ENCODE measurements at regions of chrX and their contacts with region 1.

Region 1: DNA sequence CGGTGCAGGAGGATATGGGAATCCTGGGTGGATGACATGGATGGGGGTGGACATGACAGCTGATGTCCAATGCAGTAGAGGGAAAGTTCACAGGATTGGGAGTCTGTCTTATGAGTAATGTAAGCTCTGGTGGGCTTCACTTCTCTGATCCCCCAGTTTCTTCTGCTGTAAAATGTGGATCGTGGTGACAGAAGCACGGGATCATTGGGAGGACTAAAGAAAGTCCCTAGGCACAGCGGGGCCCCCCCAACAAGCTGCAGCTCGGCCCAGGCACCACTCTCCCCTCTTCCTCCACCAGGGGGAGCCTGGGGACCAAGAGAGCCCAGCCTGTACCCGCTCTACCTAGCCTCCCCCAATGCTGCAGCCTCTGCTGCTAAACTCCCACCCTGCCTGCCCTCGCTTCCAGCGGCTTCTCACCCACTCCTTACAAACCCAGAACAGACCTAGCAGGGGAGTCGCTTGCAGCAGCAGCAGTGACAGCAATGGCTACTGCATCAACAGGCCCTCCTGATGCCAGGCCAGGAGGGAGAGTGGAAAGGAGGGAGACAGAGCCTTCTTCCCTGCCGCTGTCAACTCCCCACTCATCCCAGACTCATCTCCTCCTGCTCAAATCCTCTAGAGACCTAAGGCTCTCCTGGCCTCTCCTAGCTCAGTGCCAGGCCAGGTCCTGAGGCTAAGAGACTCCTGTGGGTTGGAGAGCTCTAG is 36.1 kb upstream of the IQSEC2 start:
- DNase-seq: peak; percentile 68
- H3K4me3 Mint-ChIP-seq: no peak overlapping the region
- H3K27ac Mint-ChIP-seq: no peak overlapping the region
- H3K4me1 Mint-ChIP-seq: no peaks in the 10 kb centered on the region
- H3K27me3 Mint-ChIP-seq: peaks cover 68% of the 10 kb centered on the region
- CTCF ChIP-seq: peak; percentile 83

Region 2: GRCh38 chrX:53071604-53072417 is 245.7 kb before region 1 on chrX:
- CTCF ChIA-PET with region 1: no interaction called
- POLR2A ChIA-PET with region 1: no interaction called
- intact Hi-C with region 1: no loop called
- DNase-seq: peak; percentile 86
- H3K4me3 Mint-ChIP-seq: peak overlapping the region; percentile 38
- H3K27ac Mint-ChIP-seq: peak overlapping the region; percentile 2
- H3K4me1 Mint-ChIP-seq: peaks cover 13% of the 10 kb centered on the region
- H3K27me3 Mint-ChIP-seq: peaks cover 71% of the 10 kb centered on the region
- CTCF ChIP-seq: peak; percentile 77

Region 3: GRCh38 chrX:53294024-53294648 is 23.4 kb before region 1 on chrX:
- CTCF ChIA-PET with region 1: interaction called, 13 read pairs
- POLR2A ChIA-PET with region 1: interaction called, 4 read pairs
- intact Hi-C with region 1: no loop called
- DNase-seq: no peak
- H3K4me3 Mint-ChIP-seq: no peak overlapping the region
- H3K27ac Mint-ChIP-seq: no peak overlapping the region
- H3K4me1 Mint-ChIP-seq: no peaks in the 10 kb centered on the region
- H3K27me3 Mint-ChIP-seq: peaks cover 62% of the 10 kb centered on the region
- CTCF ChIP-seq: peak; percentile 35

Region 4: GRCh38 chrX:53330331-53330730 is 12.8 kb after region 1 on chrX:
- CTCF ChIA-PET with region 1: interaction called, 145 read pairs
- POLR2A ChIA-PET with region 1: interaction called, 3 read pairs
- intact Hi-C with region 1: no loop called
- DNase-seq: no peak
- H3K4me3 Mint-ChIP-seq: no peak overlapping the region
- H3K27ac Mint-ChIP-seq: no peak overlapping the region
- H3K4me1 Mint-ChIP-seq: no peaks in the 10 kb centered on the region
- H3K27me3 Mint-ChIP-seq: peaks cover 98% of the 10 kb centered on the region
- CTCF ChIP-seq: no peak

Region 5: GRCh38 chrX:53433651-53434639 is 116.4 kb after region 1 on chrX and contains the start of gene HSD17B10:
- CTCF ChIA-PET with region 1: interaction called, 49 read pairs
- POLR2A ChIA-PET with region 1: interaction called, 5 read pairs
- intact Hi-C with region 1: loop called (anchors 1 kb)
- DNase-seq: peak; percentile 79
- H3K4me3 Mint-ChIP-seq: peak within 1 kb of the TSS; percentile 82
- H3K27ac Mint-ChIP-seq: peak within 1 kb of the TSS; percentile 79
- H3K4me1 Mint-ChIP-seq: peaks cover 16% of the 10 kb centered on the region
- H3K27me3 Mint-ChIP-seq: peaks cover 47% of the 10 kb centered on the region
- CTCF ChIP-seq: no peak
- total RNA-seq, gene HSD17B10: 113 and 115 TPM in 2 replicates

Region 6: DNA sequence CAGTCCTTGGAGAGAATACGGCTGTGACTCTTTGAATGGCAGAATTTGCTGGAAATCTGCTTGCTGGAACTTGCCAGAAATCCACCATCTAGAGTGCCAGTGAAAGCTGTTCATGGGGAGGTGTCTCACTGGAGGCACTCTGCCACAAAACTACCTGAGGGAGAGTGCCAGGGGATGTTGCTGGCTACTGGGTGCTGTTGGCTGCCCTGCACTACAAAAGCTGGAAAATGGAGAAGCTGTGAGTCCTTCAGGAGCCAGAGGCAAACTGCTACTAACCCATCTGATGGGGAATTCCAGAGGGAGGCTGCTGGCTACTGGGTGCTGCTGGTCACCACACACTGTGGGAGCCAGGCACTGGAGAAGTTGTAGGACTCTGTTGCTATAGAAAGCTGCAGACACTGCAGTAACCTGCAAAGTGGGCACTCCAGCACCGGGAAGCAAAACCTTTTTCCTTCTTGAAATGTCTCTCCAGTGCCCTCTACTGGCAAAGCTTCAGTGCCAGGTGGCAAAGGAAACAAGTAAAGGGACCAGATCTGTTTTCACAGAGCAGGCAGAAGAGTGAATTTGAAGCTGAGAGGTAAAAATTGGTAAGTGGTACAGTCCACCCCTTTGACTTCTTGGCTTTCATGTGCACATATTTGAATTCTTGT is 164.4 kb after region 1 on chrX:
- CTCF ChIA-PET with region 1: interaction called, 62 read pairs
- POLR2A ChIA-PET with region 1: interaction called, 3 read pairs
- intact Hi-C with region 1: loop called (anchors 1 kb)
- DNase-seq: peak; percentile 76
- H3K4me3 Mint-ChIP-seq: no peak overlapping the region
- H3K27ac Mint-ChIP-seq: no peak overlapping the region
- H3K4me1 Mint-ChIP-seq: peaks cover 14% of the 10 kb centered on the region
- H3K27me3 Mint-ChIP-seq: peaks cover 66% of the 10 kb centered on the region
- CTCF ChIP-seq: peak; percentile 72

Region 7: DNA sequence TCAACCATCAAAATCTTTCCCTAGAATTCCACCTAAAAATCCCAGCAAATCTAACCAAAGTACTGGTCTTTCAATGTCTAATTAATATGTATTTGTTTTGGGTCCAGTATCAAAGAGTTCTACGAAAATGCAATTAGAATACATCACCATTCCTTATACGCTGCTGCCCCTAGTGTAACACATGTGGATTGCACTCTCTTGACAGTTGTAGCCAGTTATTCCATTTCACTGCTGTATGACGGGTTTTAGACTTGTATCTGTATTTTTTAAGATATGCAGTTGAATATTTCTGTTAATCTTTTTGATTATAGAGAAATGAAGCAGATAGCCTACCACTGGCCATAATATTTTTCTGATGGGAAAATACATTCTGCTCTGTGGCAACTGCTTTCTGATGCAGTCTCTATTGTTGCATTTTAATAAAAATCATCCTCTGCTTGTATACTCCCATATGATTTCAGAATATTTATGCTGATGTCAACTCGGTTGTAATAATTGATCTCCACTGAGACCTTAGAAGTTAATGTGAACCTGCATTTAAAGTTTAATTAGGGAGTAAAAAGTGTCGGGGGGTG is 1740.2 kb after region 1 on chrX:
- CTCF ChIA-PET with region 1: interaction called, 7 read pairs
- POLR2A ChIA-PET with region 1: no interaction called
- intact Hi-C with region 1: loop called (anchors 5 kb)
- DNase-seq: peak; percentile 50
- H3K4me3 Mint-ChIP-seq: no peak overlapping the region
- H3K27ac Mint-ChIP-seq: no peak overlapping the region
- H3K4me1 Mint-ChIP-seq: no peaks in the 10 kb centered on the region
- H3K27me3 Mint-ChIP-seq: peaks cover 70% of the 10 kb centered on the region
- CTCF ChIP-seq: peak; percentile 84

Measured in MCF 10A (cell line).